Activated CD4-positive, alpha-beta memory T cell treated with anti-CD3 and anti-CD28 coated beads for 36 hours (primary cell): ENCODE measurements at regions of chr6 and their contacts with region 1.

Region 1: DNA sequence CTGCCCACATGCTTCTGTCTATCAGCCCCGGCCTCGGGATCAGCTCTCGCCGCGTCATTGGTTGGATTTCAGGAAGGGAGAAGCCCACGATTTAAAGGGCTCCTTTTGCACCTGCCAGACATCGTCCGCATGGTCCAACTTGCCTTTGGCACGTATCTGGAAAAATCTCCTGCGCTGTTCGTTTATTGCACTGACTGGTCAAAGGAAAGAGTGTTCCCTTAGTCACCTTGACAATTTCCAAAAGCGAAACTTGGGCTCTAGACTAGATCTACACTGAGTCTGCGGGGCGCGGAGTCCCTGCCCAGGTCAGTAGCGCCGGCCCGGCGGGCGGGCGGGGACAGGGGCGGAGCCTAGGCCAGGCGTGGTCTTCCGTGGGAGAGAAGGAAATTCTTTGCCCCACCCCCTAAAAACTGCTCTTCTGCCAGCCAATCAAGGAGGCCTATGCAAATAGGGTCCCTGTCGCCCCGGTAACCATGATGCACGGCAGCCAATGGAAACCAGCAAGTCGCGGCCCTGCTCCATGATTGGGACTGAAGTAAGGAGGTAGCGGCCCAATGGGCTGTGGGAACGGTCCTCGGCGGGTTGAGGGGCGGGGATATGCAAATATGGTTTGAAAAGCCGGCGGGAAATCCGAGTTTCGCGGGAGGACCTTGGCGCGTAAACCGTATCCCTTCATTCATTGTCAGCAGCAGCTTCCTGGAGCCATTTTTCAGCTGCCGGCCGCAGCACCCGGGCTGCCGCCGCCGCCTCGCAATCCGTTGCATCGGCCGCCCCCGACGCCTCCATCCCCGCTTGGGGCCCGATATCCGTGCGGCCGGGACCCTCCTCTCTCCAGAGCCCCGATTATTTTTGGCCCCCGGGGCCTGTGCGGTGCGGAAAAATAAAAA is at the start of gene E2F3:
- DNase-seq: peak; percentile 100
- H3K4me3 Mint-ChIP-seq: peak within 1 kb of the TSS; percentile 97
- H3K27ac Mint-ChIP-seq: peak within 1 kb of the TSS; percentile 98
- H3K4me1 Mint-ChIP-seq: peaks cover 35% of the 10 kb centered on the region
- H3K27me3 Mint-ChIP-seq: no peaks in the 10 kb centered on the region
- total RNA-seq, gene E2F3: 17.9 to 18.2 TPM

Region 2: DNA sequence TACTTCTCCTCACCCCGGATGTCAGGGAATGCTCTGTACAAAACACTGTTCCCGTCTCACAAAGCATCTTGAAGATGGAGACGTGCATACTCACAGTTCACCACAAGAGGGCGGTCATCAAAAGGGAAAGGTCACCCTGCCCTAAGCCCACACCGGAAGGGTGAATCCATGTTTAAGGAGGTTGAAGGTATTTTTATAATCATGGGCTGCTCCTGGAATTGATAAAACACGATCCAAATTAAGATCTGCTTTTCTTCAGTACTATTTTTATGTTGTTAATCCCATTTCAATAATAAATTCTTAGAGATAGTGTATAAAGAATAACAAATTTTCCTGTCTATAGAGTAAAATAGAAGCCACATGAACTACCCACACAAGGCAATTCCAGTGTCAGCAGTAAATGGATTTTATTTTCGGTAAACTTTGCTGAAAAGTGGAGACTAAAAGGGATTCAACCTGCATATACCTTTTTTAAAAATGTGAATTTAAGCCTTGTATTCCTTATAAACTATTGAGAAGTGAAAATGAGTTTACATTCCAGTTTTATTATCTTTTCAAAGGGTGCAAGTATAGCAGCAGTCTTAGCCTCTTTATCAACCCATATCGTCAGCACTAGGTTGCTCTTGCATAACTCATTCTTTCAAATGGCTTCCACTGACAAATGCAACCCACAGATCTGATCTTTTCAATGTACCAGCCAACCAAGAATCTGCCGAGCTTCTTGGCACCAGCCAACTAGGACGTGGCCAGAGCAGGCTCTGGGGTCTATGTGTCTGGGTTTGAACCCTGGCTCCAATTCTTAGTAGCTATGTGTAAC is 109.5 kb before region 1 on chr6:
- CTCF ChIA-PET with region 1: interaction called, 9 read pairs
- POLR2A ChIA-PET with region 1: interaction called, 3 read pairs
- intact Hi-C with region 1: loop called (anchors 1 kb)
- DNase-seq: peak; percentile 85
- H3K4me3 Mint-ChIP-seq: no peak overlapping the region
- H3K27ac Mint-ChIP-seq: no peak overlapping the region
- H3K4me1 Mint-ChIP-seq: peaks cover 7% of the 10 kb centered on the region
- H3K27me3 Mint-ChIP-seq: no peaks in the 10 kb centered on the region

Region 3: DNA sequence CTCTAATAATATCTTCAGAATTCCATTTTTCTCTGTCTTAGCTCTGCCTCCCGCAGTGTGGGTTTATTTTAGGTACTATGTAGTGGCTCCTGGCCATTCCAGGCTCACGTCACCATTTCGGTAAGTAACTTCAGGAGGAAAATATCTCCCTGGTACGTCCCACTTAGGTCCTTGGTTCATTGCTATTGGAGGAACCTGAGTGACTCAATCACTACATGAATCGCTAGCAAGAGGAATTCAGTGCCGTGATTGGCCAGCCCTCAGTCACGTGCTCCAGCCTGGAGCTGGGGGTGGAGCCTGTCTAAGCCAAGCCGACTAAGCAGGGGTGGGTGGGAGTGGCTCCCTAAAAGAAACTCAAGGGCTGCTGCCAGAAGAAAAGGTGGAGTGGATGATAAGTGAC is 67.1 kb before region 1 on chr6:
- CTCF ChIA-PET with region 1: interaction called, 5 read pairs
- POLR2A ChIA-PET with region 1: no interaction called
- intact Hi-C with region 1: loop called (anchors 1 kb)
- DNase-seq: peak; percentile 14
- H3K4me3 Mint-ChIP-seq: no peak overlapping the region
- H3K27ac Mint-ChIP-seq: no peak overlapping the region
- H3K4me1 Mint-ChIP-seq: peaks cover 18% of the 10 kb centered on the region
- H3K27me3 Mint-ChIP-seq: no peaks in the 10 kb centered on the region

Region 4: GRCh38 chr6:20366091-20366832 is 35.2 kb before region 1 on chr6:
- CTCF ChIA-PET with region 1: interaction called, 5 read pairs
- POLR2A ChIA-PET with region 1: no interaction called
- intact Hi-C with region 1: loop called (anchors 1 kb)
- DNase-seq: peak; percentile 45
- H3K4me3 Mint-ChIP-seq: peak overlapping the region; percentile 45
- H3K27ac Mint-ChIP-seq: peak overlapping the region; percentile 83
- H3K4me1 Mint-ChIP-seq: peaks cover 53% of the 10 kb centered on the region
- H3K27me3 Mint-ChIP-seq: no peaks in the 10 kb centered on the region

Region 5: GRCh38 chr6:20473518-20473917 is 72.1 kb after region 1 on chr6:
- CTCF ChIA-PET with region 1: no interaction called
- POLR2A ChIA-PET with region 1: no interaction called
- intact Hi-C with region 1: no loop called
- DNase-seq: no peak
- H3K4me3 Mint-ChIP-seq: no peak overlapping the region
- H3K27ac Mint-ChIP-seq: no peak overlapping the region
- H3K4me1 Mint-ChIP-seq: peaks cover 2% of the 10 kb centered on the region
- H3K27me3 Mint-ChIP-seq: no peaks in the 10 kb centered on the region